HepG2 (cell line): ENCODE measurements at regions of chr5 and their contacts with region 1.

Region 1: DNA sequence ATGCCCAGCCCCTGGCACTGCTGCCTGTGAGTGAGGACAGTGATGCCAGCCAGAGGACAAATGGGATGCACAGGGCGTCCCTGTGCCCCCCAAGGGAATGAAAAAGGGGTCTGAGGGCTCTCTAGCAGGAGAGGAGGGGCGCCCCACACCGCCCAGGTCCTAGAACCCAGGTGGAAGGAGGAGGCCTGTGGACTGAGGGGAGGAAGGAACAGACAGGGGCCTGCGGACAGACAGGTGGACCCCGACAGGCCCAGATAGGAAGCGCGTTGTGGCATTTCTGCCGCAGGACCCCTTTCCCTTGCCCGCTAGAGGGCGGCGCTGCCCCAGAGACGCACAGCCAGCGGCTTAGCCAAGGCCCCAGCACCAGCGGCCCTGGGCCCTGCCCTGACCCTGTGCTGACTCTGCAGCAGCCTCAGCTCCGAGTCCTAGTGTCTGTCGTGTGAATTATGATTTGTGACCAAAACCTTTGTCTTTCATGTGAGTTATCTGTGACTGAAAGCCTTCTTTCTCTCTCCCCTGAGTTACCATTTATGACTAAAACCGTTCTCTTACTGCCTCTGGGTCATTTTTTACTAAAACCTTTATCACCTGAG is 30.7 kb downstream of the TRIP13 start:
- DNase-seq: peak; percentile 66
- ATAC-seq: peak; percentile 95
- H3K4me3 ChIP-seq: no peak overlapping the region
- H3K27ac ChIP-seq: no peak overlapping the region
- H3K4me1 ChIP-seq: peaks cover 22% of the 10 kb centered on the region
- H3K27me3 ChIP-seq: no peaks in the 10 kb centered on the region
- CTCF ChIP-seq: peak; percentile 98
- EP300 ChIP-seq: no peak
- POLR2A ChIP-seq: no peak
- RAD21 ChIP-seq: peak; percentile 98

Region 2: GRCh38 chr5:956941-957747 is 33.8 kb after region 1 on chr5:
- CTCF ChIA-PET with region 1: no interaction called
- POLR2A ChIA-PET with region 1: no interaction called
- in situ Hi-C with region 1: no loop called
- intact Hi-C with region 1: loop called (anchors 1 kb)
- DNase-seq: peak; percentile 77
- ATAC-seq: peak; percentile 41
- H3K4me3 ChIP-seq: peak overlapping the region in 1 of 3 experiments; percentile 5; a peak in 1 of 6 replicates
- H3K27ac ChIP-seq: no peak overlapping the region
- H3K4me1 ChIP-seq: peaks cover 34% of the 10 kb centered on the region
- H3K27me3 ChIP-seq: peaks cover 6 to 69% of the 10 kb centered on the region in 2 experiments; a peak in 4 of 5 replicates
- CTCF ChIP-seq: no peak
- EP300 ChIP-seq: no peak
- POLR2A ChIP-seq: no peak
- RAD21 ChIP-seq: no peak

Region 3: GRCh38 chr5:982377-983237 is 59.2 kb after region 1 on chr5:
- CTCF ChIA-PET with region 1: interaction called, 3 read pairs
- POLR2A ChIA-PET with region 1: no interaction called
- in situ Hi-C with region 1: no loop called
- intact Hi-C with region 1: loop called (anchors 5 kb)
- DNase-seq: no peak
- ATAC-seq: peak; percentile 91
- H3K4me3 ChIP-seq: no peak overlapping the region
- H3K27ac ChIP-seq: no peak overlapping the region
- H3K4me1 ChIP-seq: peaks cover 20% of the 10 kb centered on the region
- H3K27me3 ChIP-seq: peaks cover 9 to 35% of the 10 kb centered on the region in 2 experiments; a peak in 4 of 5 replicates
- CTCF ChIP-seq: peak; percentile 56
- EP300 ChIP-seq: no peak
- POLR2A ChIP-seq: no peak
- RAD21 ChIP-seq: peak; percentile 37; the same call in 1 of the 2 replicates

Region 4: DNA sequence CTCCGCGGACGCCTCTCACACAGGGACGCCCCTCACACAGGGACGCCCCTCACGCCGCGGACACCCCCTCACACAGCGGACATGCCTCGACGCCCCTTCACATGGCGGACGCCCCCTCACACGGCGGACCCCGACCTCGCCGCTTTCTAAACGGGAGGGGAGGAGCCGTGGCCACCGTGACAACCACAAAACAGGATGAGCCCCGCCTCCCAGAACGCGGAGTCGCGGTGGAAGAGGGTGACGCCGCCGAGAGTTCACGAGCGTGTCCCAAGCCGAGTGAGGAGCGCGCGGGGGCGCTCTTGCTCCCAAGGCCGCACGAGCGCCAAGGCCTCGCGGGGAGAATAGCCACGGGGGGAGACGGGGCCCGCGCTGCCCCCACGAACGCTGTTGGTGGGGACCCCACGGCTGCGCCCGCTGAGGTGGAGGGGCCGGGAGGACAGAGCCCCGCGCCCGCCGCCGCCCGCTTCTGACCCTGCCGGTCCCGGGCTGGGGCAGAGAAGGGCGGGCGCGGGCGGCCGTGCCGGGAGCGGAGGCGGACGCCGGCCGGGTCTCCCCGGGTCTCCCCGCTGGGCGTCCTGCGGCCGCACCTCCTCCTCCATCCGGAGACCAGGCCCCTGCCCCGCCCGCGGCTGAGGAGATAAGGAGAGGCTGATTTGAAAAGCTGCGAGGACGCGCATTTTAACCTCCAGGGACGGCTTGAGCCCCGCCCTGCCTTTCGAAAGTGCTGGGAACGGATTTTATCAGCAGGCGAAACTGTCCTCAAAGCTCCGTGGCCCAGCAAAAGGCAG is 81.3 kb after region 1 on chr5:
- CTCF ChIA-PET with region 1: interaction called, 34 read pairs
- POLR2A ChIA-PET with region 1: no interaction called
- in situ Hi-C with region 1: no loop called
- intact Hi-C with region 1: no loop called
- DNase-seq: no peak
- ATAC-seq: peak; percentile 46
- H3K4me3 ChIP-seq: peak overlapping the region; percentile 34 to 67 (median 40); a peak in 5 of 6 replicates
- H3K27ac ChIP-seq: no peak overlapping the region
- H3K4me1 ChIP-seq: peaks cover 43% of the 10 kb centered on the region
- H3K27me3 ChIP-seq: peaks cover 9 to 80% of the 10 kb centered on the region in 2 experiments
- CTCF ChIP-seq: peak; percentile 76
- EP300 ChIP-seq: no peak
- POLR2A ChIP-seq: no peak
- RAD21 ChIP-seq: no peak